ENCODE measurements at regions of chr12 and their contacts with region 1.

Region 1: GRCh38 chr12:71754461-71755145 is at the start of gene RAB21:
- DNase-seq: peak; percentile 97 to 98 (median 98)
- H3K4me3 ChIP-seq: peak within 1 kb of the TSS; percentile 59
- H3K27ac ChIP-seq: peak within 1 kb of the TSS; percentile 77 to 90
- H3K4me1 ChIP-seq: peaks cover 2% of the 10 kb centered on the region
- H3K27me3 ChIP-seq: no peaks in the 10 kb centered on the region
- CTCF ChIP-seq: peak; percentile 21 to 55 (median 28)
- EP300 ChIP-seq: peak; percentile 19
- POLR2A ChIP-seq: peak; percentile 93
- total RNA-seq, gene RAB21: 8.8 to 77.0 (median 66.2) TPM

Region 2: DNA sequence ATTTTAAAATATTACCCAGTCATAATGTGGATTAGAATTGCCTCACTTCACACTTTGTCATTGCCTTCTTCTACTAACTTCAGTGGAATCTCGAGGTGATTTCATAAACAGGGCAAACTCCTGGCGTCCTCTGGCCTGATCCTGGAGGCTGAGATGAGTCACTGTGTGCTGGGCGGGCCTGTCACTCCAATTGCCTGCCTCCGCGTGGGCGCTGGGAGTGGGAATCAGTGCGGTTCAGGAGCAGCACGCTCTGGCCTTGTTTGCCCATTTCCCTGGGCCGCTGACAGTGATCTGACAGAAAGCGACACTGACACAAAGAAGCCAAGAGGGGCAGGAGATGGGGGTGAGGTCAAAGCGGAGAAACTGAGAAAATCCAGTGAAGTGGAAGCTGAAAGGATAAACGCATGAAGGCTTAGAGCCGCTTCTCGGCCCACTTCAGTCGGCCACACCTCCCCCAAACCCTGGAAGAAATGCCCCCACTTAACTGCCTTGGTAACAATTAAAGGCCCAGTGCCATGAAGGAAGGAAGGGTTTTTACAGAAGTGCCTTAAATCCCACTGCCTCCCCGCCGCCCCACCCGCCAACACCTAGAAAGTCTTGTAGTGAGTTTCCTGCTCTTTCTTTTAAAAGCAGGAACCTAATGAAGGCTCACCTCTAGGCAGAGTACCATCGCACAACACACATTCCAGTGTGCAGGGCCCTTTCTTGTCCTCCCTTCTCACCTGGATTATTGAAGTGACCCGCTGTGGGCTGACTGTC is 285.2 kb before region 1 on chr12:
- intact Hi-C with region 1: no loop called
- DNase-seq: no peak
- H3K4me3 ChIP-seq: no peak overlapping the region
- H3K27ac ChIP-seq: no peak overlapping the region
- H3K4me1 ChIP-seq: no peaks in the 10 kb centered on the region
- H3K27me3 ChIP-seq: no peaks in the 10 kb centered on the region
- CTCF ChIP-seq: no peak
- EP300 ChIP-seq: no peak
- POLR2A ChIP-seq: no peak

Region 3: DNA sequence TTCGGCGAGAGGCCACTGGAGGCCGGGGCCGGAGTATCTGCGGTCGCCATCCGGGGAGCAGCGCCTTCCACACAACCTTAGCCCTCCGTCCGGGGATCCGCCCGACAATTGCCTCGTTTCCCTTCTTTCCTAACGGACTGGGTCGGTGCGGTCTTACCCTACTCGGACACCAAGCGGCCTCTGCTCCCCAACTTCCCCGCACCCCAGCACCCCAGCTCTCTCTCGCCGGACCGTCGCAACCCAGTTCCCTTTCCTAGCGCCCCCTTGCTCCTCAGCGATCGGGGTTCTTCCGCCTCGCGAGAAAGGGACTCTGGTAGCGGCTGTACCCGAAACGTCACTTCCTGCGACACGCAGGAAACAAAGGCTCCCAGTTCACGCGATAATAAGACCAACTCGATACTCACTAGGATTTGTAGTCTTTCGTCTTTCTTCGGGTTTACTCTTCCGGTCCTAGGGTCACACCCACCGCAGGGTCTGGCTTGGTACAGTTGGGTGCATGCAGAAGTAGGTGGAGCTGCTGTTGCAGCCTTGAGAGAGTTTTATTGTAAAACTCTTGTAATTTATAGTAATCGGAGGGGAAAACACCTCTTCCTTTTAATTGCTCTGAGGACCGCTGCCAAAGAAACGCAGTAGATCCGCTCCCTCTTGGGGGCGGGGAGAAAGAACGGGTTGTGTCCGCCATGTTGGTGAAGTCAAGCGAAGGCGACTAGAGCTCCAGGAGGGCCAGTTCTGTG is 90.9 kb before region 1 on chr12 and contains the start of gene ZFC3H1:
- intact Hi-C with region 1: loop called in 2 of 4 experiments (anchors 5 to 10 kb)
- DNase-seq: peak; percentile 91 to 94 (median 92)
- H3K4me3 ChIP-seq: peak within 1 kb of the TSS; percentile 99
- H3K27ac ChIP-seq: peak within 1 kb of the TSS; percentile 85 to 91
- H3K4me1 ChIP-seq: peaks cover 4% of the 10 kb centered on the region
- H3K27me3 ChIP-seq: no peaks in the 10 kb centered on the region
- CTCF ChIP-seq: peak in 1 of 3 donors; percentile 15
- EP300 ChIP-seq: no peak
- POLR2A ChIP-seq: peak; percentile 85
- total RNA-seq, gene ZFC3H1: 30.1 to 51.0 (median 42.5) TPM

Region 4: DNA sequence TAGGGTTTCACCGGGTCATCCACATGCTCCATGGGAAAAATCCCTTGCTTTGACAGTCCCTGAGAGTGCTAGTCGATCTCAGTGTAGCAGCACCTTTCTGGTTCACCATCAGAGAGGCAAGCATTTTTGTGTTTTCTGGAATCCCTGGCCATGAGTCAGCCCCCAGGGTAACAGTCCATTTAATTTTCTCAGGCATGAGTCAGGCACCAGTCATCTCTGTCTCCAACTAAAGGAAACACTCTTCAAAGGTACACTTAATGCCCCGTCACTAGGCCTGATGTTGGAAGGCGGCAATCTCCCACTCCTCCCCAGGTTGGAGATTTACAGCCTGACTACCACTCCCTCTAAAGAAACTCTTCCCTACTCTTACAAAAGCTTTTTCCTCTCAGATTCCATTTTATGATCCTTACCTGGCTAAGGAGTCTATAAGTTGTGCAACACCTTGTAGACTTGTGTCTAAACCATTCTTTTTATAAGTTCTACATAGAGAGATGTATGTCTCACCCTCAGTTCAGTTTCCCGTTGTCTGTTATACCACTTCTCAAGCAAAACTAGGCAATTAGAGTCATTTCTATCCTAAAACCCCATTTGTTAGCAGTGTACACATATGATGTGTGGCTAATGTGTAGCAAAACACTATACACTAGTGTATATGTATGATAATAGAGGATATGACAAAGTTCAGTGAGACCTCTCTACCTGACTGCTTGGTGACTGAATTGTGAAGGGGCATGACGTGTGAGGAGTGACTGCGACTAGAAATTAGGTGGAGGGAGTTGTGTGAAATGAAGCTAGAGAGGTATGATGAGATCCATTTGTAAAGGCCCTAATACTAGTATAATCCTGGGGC is 44.1 kb before region 1 on chr12:
- intact Hi-C with region 1: no loop called
- DNase-seq: no peak
- H3K4me3 ChIP-seq: no peak overlapping the region
- H3K27ac ChIP-seq: no peak overlapping the region
- H3K4me1 ChIP-seq: no peaks in the 10 kb centered on the region
- H3K27me3 ChIP-seq: no peaks in the 10 kb centered on the region
- CTCF ChIP-seq: no peak
- EP300 ChIP-seq: no peak
- POLR2A ChIP-seq: no peak

Measured in ovary (tissue), 10 donors.